H1 (cell line): ENCODE measurements at regions of chr6 and their contacts with region 1.

Region 1: DNA sequence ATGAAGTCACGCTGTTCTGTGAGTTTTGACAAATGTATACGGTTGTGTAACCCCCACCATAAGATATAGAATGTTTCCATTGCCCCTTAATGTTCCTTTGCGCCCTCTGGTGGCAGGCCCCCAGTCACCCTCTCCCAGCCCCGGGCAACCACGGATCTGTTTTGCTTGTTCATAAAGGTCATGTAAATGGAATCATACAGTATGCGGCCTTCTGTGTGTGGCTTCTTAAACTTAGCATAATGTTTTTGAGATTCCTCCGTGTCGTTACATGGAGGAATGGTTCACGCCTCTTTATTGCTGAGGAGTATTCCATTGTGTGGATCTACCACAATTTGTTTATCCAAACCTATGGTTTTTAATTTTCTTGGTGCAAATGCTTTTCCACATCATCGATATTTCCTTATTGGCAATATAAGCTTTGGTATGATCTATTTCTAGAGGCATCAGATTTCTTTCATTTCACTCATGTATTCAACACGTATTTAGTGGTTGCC is 28.4 kb downstream of the LYRM2 start:
- DNase-seq: peak in 1 of 2 experiments; percentile 90
- H3K4me3 ChIP-seq: no peak overlapping the region
- H3K27ac ChIP-seq: no peak overlapping the region
- H3K4me1 ChIP-seq: no peaks in the 10 kb centered on the region
- H3K27me3 ChIP-seq: no peaks in the 10 kb centered on the region
- CTCF ChIP-seq: peak; percentile 80 to 89 (median 82)
- EP300 ChIP-seq: no peak
- POLR2A ChIP-seq: no peak
- RAD21 ChIP-seq: peak; percentile 75 to 77

Region 2: GRCh38 chr6:89412071-89413005 is 197.9 kb before region 1 on chr6 and contains the start of gene RRAGD:
- CTCF ChIA-PET with region 1: interaction called, 21 read pairs
- POLR2A ChIA-PET with region 1: no interaction called
- DNase-seq: peak in 1 of 2 experiments; percentile 67
- H3K4me3 ChIP-seq: peak within 1 kb of the TSS; percentile 63 to 98 (median 68)
- H3K27ac ChIP-seq: no peak within 1 kb of the TSS
- H3K4me1 ChIP-seq: peaks cover 10 to 11% (median 10%) of the 10 kb centered on the region in 4 experiments; a peak in 6 of 7 replicates
- H3K27me3 ChIP-seq: peaks cover 2 to 19% (median 16%) of the 10 kb centered on the region in 4 experiments
- CTCF ChIP-seq: no peak
- EP300 ChIP-seq: no peak
- POLR2A ChIP-seq: no peak
- RAD21 ChIP-seq: no peak
- total RNA-seq, gene RRAGD: 29.7 and 30.8 TPM in 2 replicates

Region 3: DNA sequence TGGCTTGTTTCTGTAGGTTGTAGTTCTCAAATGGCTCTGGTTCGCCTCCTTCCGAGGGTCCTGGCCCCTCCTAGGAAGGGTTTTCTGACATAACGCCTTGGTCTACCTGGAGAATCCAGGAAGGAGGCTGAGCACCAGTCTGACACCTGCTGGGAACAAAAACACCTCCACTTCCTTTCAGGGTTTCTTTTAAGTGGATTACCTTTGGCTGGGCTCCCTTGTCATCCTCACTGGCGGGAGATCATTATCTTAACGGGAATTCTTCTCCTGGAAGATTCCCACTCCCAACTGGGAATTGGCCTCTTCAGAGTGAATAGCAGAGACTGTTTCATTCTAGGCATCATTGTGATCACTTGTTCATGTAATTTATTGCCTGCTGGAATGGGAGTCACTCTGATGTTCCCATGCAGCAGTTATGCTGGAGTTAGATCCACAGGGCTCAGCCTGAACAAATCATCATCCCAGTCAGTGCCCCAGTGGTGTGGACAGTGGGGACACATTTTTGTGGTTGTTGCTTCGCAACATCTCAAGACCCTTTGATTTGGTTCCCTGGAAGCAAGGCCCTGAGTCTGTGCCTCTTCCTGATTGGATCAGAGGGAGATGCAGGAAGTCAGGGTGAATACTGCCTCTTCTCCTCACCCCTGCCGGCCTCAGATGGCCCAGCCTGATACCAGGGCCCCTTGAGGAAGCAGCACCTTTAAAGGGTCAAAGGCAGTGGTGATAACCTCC is 20.7 kb before region 1 on chr6:
- CTCF ChIA-PET with region 1: interaction called, 23 read pairs
- POLR2A ChIA-PET with region 1: no interaction called
- DNase-seq: no peak
- H3K4me3 ChIP-seq: no peak overlapping the region
- H3K27ac ChIP-seq: no peak overlapping the region
- H3K4me1 ChIP-seq: peaks cover 0 to 3% (median 0%) of the 10 kb centered on the region in 4 experiments; a peak in 1 of 7 replicates
- H3K27me3 ChIP-seq: no peaks in the 10 kb centered on the region
- CTCF ChIP-seq: no peak
- EP300 ChIP-seq: no peak
- POLR2A ChIP-seq: no peak
- RAD21 ChIP-seq: peak in 1 of 2 experiments; percentile 33; a peak in 2 of 4 replicates

Region 4: GRCh38 chr6:89597988-89598692 is 12.1 kb before region 1 on chr6:
- CTCF ChIA-PET with region 1: interaction called, 38 read pairs
- POLR2A ChIA-PET with region 1: no interaction called
- DNase-seq: no peak
- H3K4me3 ChIP-seq: no peak overlapping the region
- H3K27ac ChIP-seq: no peak overlapping the region
- H3K4me1 ChIP-seq: no peaks in the 10 kb centered on the region
- H3K27me3 ChIP-seq: 0 out of 7 replicates have a peak, but pooled peaks cover 0 to 2% (median 0%) of the 10 kb centered on the region in 4 experiments
- CTCF ChIP-seq: no peak; a peak in 1 of 4 replicates
- EP300 ChIP-seq: no peak
- POLR2A ChIP-seq: no peak
- RAD21 ChIP-seq: peak; percentile 46 to 49

Region 5: DNA sequence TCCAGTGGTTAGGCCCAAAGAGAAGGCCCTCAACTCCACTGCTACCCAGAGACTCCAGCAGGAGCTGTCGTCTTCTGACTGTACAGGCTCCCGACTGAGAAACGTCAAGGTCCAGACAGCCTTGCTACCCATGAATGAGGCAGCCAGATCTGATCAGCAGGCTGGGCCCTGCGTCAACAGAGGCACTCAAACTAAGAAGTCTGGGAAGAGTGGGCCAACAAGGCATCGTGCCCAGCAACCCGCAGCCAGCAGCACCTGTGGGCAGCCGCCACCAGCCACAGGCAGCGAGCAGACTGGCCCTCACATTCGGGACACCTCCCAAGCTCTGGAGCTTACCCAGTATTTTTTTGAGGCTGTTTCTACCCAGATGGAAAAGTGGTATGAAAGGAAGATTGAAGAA is 20.3 kb after region 1 on chr6:
- CTCF ChIA-PET with region 1: interaction called, 12 read pairs
- POLR2A ChIA-PET with region 1: no interaction called
- DNase-seq: no peak
- H3K4me3 ChIP-seq: no peak overlapping the region
- H3K27ac ChIP-seq: no peak overlapping the region
- H3K4me1 ChIP-seq: no peaks in the 10 kb centered on the region
- H3K27me3 ChIP-seq: no peaks in the 10 kb centered on the region
- CTCF ChIP-seq: no peak
- EP300 ChIP-seq: no peak
- POLR2A ChIP-seq: no peak
- RAD21 ChIP-seq: no peak

Region 6: GRCh38 chr6:89667872-89668556 is 57.8 kb after region 1 on chr6:
- CTCF ChIA-PET with region 1: no interaction called
- POLR2A ChIA-PET with region 1: no interaction called
- DNase-seq: no peak
- H3K4me3 ChIP-seq: peak overlapping the region in 1 of 4 experiments; percentile 25; a peak in 1 of 8 replicates
- H3K27ac ChIP-seq: no peak overlapping the region
- H3K4me1 ChIP-seq: peaks cover 4 to 11% (median 6%) of the 10 kb centered on the region in 4 experiments; a peak in 5 of 7 replicates
- H3K27me3 ChIP-seq: no peaks in the 10 kb centered on the region
- CTCF ChIP-seq: no peak
- EP300 ChIP-seq: no peak
- POLR2A ChIP-seq: no peak
- RAD21 ChIP-seq: no peak